ENCODE measurements at regions of chr12 and their contacts with region 1.

Region 1: DNA sequence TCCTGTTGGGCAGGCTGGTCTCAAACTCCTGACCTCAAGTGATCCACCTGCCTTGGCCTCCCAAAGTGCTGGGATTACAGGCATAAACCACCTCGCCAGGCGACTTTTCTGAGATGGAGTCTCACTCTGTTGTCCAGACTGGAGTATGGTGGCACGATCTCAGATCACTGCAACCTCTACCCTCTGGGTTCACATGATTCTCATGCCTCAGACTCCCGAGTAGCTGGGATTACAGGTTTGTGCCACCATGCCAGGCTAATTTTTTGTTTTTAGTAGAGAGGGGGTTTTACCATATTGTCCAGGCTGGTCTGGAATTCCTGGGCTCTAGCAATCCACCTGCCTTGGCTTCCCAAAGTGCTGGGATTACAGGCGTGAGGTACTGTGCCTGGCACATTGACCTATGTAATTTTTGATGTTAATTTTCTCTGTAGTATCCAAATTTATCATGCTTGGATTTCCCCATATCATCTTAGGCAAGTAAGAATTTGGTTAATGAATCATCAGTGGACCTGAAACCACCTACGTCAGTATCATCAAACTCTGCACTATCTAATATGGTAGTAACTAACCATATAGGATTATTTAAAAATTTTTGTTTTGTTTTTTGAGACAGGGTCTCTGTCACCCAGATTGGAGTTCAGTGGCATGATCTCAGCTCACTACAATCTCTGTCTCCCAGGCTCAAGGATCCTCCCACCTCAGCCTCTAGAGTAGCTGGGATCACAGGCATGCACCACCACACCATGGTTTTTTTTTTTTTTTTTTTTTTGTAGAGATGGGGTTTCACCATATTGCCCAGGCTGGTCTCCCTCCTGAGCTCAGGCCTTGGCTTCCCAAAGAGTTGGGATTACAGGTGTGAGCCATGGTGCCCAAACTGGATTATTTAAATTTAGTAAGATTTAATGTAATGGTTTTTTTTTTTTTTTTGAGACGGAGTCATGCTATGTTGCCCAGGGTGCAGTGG is 11.9 kb upstream of the ATP5F1B start:
- DNase-seq: no peak
- H3K4me3 ChIP-seq: no peak overlapping the region
- H3K27ac ChIP-seq: no peak overlapping the region
- H3K4me1 ChIP-seq: no peaks in the 10 kb centered on the region
- H3K27me3 ChIP-seq: no peaks in the 10 kb centered on the region
- CTCF ChIP-seq: no peak
- EP300 ChIP-seq: no peak
- POLR2A ChIP-seq: no peak
- RAD21 ChIP-seq: no peak

Region 2: DNA sequence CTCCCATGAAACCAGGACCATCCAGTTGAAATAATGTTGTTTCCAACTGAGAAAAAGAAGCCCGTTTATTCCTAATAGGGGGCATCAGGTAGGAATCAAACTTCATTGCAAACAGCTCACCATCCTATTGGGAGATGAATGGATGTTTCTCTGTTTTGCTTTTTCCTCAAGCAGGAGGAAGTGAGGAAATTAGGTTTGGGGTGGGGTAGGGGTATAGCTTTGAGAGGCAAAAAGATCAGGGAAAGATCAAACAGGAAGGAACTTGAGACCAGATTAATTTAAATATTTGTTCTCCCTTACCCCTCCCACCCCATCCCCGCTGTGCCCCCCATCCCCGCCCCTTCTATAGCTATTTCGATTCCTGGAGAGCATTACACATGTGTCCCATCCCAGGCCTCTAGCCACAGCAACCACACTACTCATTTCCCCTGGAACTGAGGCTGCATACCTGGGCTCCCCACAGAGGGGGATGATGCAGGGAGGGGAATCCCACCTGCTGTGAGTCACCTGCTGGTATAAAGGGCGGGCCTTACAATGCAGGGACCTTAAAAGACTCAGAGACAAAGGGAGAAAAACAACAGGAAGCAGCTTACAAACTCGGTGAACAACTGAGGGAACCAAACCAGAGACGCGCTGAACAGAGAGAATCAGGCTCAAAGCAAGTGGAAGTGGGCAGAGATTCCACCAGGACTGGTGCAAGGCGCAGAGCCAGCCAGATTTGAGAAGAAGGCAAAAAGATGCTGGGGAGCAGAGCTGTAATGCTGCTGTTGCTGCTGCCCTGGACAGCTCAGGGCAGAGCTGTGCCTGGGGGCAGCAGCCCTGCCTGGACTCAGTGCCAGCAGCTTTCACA is 319.2 kb before region 1 on chr12 and contains the start of gene IL23A:
- CTCF ChIA-PET with region 1: no interaction called
- POLR2A ChIA-PET with region 1: no interaction called
- DNase-seq: peak; percentile 63 to 74
- H3K4me3 ChIP-seq: peak within 1 kb of the TSS in 2 of 4 experiments; percentile 28 to 29; a peak in 4 of 8 replicates
- H3K27ac ChIP-seq: peak within 1 kb of the TSS; percentile 12; the same call in 1 of the 2 replicates
- H3K4me1 ChIP-seq: peaks cover 9 to 18% (median 13%) of the 10 kb centered on the region in 4 experiments
- H3K27me3 ChIP-seq: no peaks in the 10 kb centered on the region
- CTCF ChIP-seq: no peak
- EP300 ChIP-seq: no peak
- POLR2A ChIP-seq: 0 out of 3 replicates have a peak, but pooled peaks of 1 of the 2 experiments have one; percentile 31
- RAD21 ChIP-seq: no peak
- total RNA-seq, gene IL23A: 1.4 and 2.3 TPM in 2 replicates

Region 3: DNA sequence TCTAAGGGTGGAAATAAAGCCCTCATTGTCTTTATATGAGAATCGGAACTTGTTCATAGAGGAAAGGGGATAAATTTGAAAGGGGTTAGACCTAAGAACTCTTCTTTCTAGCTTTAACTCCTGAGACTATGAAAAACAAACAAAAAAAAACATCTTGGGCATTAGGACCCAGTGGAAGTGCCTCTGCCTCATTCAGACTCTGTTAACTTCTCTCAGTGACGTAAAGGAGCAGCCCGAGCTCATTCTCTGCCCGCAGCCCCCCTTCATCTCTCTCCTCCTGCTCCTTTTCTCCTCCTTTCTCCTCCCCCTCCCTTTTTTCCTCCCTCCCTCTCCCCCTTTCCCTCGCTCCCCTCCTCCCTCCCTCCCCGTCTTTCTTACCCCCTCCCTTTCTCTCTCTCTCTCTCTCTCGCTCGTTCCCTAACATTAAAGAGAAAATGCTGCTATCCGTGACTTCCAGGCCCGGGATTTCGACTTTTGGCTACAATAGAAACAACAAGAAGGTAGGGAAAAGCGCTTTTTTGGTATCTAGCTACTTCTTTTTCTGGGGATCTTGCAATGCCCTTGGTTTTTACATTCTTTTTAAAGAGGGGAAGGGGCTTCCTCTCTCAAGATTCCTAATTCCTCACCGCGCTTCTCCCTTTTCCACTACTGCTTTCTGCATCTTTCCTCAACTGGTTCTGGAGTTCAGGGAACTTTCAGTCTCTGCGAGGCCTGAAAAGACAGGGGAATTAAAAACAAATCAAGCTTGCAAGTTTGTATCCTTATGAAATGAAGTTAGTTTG is 135.9 kb before region 1 on chr12 and contains the start of gene RBMS2:
- CTCF ChIA-PET with region 1: no interaction called
- POLR2A ChIA-PET with region 1: no interaction called
- DNase-seq: peak in 1 of 2 experiments; percentile 73
- H3K4me3 ChIP-seq: peak within 1 kb of the TSS; percentile 53 to 84 (median 65)
- H3K27ac ChIP-seq: no peak within 1 kb of the TSS
- H3K4me1 ChIP-seq: peaks cover under 1 to 2% (median 2%) of the 10 kb centered on the region in 4 experiments; a peak in 5 of 7 replicates
- H3K27me3 ChIP-seq: no peaks in the 10 kb centered on the region
- CTCF ChIP-seq: no peak
- EP300 ChIP-seq: no peak; a peak in 1 of 3 replicates
- POLR2A ChIP-seq: no peak
- RAD21 ChIP-seq: no peak
- total RNA-seq, gene RBMS2: 25.5 and 31.3 TPM in 2 replicates

Region 4: GRCh38 chr12:56590237-56590830 is 67.4 kb before region 1 on chr12:
- CTCF ChIA-PET with region 1: no interaction called
- POLR2A ChIA-PET with region 1: no interaction called
- DNase-seq: no peak
- H3K4me3 ChIP-seq: no peak overlapping the region
- H3K27ac ChIP-seq: no peak overlapping the region
- H3K4me1 ChIP-seq: peaks cover 5 to 13% (median 10%) of the 10 kb centered on the region in 4 experiments; a peak in 6 of 7 replicates
- H3K27me3 ChIP-seq: no peaks in the 10 kb centered on the region
- CTCF ChIP-seq: peak; percentile 45 to 78 (median 75)
- EP300 ChIP-seq: no peak
- POLR2A ChIP-seq: no peak
- RAD21 ChIP-seq: peak; percentile 53 to 68

Region 5: GRCh38 chr12:56622535-56622934 is 35.2 kb before region 1 on chr12:
- CTCF ChIA-PET with region 1: no interaction called
- POLR2A ChIA-PET with region 1: no interaction called
- DNase-seq: no peak
- H3K4me3 ChIP-seq: no peak overlapping the region
- H3K27ac ChIP-seq: no peak overlapping the region
- H3K4me1 ChIP-seq: no peaks in the 10 kb centered on the region
- H3K27me3 ChIP-seq: no peaks in the 10 kb centered on the region
- CTCF ChIP-seq: no peak
- EP300 ChIP-seq: no peak
- POLR2A ChIP-seq: no peak
- RAD21 ChIP-seq: no peak

Region 6: DNA sequence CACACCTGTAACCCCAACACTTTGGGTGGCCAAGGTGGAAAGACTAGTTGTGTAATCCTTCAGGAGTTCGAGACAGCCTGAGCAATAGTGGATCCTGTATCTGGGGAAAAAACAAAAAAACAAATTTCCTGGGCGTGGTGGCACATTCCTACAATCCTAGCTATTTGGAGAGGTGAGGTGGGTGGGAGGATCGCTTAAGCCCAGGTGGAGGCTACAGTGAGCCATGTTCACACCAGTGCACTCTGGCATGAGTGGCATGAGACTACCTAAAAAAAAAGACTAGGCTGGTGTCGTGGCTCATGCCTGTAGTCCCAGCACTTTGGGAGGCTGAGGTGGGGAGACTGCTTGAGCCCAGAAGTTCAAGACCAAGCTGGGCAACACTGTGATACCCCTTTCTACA is 13.1 kb after region 1 on chr12:
- CTCF ChIA-PET with region 1: interaction called, 5 read pairs
- POLR2A ChIA-PET with region 1: interaction called, 31 read pairs
- DNase-seq: no peak
- H3K4me3 ChIP-seq: no peak overlapping the region
- H3K27ac ChIP-seq: no peak overlapping the region
- H3K4me1 ChIP-seq: no peaks in the 10 kb centered on the region
- H3K27me3 ChIP-seq: 0 out of 7 replicates have a peak, but pooled peaks cover 0 to 2% (median 0%) of the 10 kb centered on the region in 4 experiments
- CTCF ChIP-seq: no peak
- EP300 ChIP-seq: no peak
- POLR2A ChIP-seq: no peak
- RAD21 ChIP-seq: no peak

Region 7: DNA sequence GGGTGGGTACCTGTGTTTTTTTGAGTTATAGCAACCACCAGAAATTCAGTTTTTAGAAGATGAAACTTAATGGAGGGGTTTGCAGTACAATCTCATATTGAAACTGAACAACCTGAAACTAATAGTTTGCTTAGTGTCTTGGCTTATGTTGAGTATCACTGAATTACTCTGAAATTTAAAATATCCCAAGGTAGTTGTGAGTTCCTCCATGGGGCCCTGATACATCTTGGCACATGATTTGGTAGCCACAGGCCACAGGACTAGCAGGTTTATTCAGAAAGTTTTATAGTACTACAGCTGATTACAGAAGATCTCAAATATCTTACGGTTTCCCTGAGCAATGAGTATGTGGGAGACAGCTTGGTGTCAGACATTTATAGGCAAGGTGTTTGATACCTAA is 20.0 kb after region 1 on chr12:
- CTCF ChIA-PET with region 1: interaction called, 4 read pairs
- POLR2A ChIA-PET with region 1: interaction called, 46 read pairs
- DNase-seq: no peak
- H3K4me3 ChIP-seq: no peak overlapping the region
- H3K27ac ChIP-seq: no peak overlapping the region
- H3K4me1 ChIP-seq: peaks cover 0 to 3% (median 0%) of the 10 kb centered on the region in 4 experiments; a peak in 2 of 7 replicates
- H3K27me3 ChIP-seq: no peaks in the 10 kb centered on the region
- CTCF ChIP-seq: no peak
- EP300 ChIP-seq: no peak
- POLR2A ChIP-seq: no peak
- RAD21 ChIP-seq: no peak

Measured in H1 (cell line).